Dorsolateral prefrontal cortex (tissue), 120 donors: ENCODE measurements at regions of chr12 and their contacts with region 1.

Region 1: GRCh38 chr12:32302218-32303173 is 96.9 kb upstream of the FGD4 start:
- DNase-seq: no peak
- H3K4me3 ChIP-seq: no peak overlapping the region
- H3K27ac ChIP-seq: no peak overlapping the region
- H3K27me3 ChIP-seq: no peaks in the 10 kb centered on the region
- CTCF ChIP-seq: peak in 31 of 56 donors; percentile 9 to 59 (median 33)

Region 2: DNA sequence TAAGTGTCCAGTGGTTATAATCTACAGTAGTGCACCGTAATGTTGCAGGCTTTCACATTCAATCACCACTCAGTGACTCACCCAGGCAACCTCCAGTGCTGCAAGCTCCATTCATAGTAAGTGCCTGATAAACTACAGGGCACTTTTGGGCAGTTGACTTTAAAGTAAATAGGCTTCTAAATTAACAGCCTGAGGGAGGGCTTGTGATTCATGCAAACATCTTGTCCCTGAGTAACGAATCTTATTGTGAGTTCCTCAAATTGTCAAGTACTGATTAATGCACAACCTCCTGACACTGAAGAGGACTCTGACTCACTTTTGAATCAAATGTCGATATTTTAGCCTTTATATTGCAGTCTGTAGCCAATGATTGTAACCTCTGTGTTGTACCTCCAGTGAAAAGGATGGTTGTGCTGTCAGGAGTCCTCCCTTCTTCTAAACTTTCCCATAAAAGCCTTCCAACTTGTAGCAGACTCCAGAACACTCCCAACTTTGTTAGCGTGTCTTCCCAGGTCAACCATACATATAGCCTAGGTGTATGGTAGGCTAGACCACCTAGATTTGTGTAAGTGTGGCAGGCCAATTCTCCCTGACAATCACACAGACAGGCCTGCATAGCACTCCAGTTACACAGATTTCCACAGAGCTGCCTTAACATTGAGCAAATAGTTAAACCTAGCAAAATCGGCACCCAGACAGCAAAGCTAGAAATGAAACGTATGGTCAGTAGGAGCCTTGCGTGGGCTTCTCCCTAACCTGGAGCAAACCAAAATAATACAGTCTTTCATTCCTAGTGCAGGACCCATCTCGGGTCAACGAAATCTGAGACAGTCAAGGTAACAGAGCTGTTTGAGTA is 250.7 kb before region 1 on chr12:
- intact Hi-C with region 1: loop called in 1 of 2 experiments (anchors 5 kb)
- DNase-seq: no peak
- H3K4me3 ChIP-seq: no peak overlapping the region
- H3K27ac ChIP-seq: no peak overlapping the region
- H3K27me3 ChIP-seq: no peaks in the 10 kb centered on the region
- CTCF ChIP-seq: no peak

Region 3: DNA sequence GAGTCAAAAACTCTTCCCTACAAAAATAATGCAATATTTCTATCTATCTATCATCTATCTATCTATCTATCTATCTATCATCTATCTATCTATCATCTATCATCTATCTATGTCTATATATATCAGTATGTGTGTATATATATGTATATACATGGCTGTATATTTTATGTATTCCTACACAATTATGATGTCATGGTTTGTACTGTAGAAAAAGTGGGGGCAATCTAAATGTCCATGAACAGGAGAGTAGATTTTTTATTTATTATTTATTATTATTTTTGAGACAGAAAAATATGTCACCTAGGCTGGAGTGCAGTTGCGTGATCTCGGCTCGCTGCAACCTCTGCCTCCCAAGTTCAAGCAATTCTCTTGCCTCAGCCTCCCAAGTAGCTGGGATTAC is 241.5 kb before region 1 on chr12:
- intact Hi-C with region 1: loop called (anchors 2 to 5 kb)
- DNase-seq: no peak
- H3K4me3 ChIP-seq: no peak overlapping the region
- H3K27ac ChIP-seq: no peak overlapping the region
- H3K27me3 ChIP-seq: no peaks in the 10 kb centered on the region
- CTCF ChIP-seq: no peak